ENCODE measurements at regions of chr1 and their contacts with region 1.

Region 1: DNA sequence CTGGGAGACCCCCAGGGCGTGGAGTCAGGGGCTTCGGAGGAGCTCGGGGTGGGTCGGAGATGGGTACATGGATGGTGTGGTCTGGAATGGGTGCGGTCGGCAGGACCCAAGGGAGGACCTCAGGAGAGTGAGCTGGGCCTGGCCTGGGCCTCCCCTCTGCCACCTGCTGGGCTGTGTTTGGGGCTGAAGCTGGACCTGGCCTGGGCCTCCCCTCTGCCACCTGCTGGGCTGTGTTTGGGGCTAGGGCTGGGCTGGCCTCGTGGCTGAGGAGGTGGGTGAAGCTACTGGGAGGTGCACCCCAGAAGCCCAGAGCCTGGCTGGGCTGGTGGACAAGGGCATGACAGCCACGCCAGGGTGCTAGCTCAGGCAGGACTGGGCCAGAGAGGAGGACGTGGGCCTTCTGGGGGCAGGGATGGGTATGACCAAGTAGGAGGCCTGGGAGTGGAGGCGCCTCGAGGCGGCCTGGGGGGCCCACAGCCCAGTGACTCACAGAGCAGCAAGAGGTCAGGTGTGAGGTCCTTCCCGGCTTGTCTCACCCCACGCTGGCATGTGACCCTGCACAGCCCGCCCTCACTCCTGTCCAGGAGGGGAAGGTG is 14.5 kb downstream of the SAMD11 start:
- DNase-seq: peak; percentile 65
- ATAC-seq: peak; percentile 75
- H3K4me3 ChIP-seq: no peak overlapping the region
- H3K27ac ChIP-seq: no peak overlapping the region
- H3K4me1 ChIP-seq: peaks cover 27% of the 10 kb centered on the region
- H3K27me3 ChIP-seq: peaks cover 40% of the 10 kb centered on the region
- CTCF ChIP-seq: peak; percentile 81

Region 2: GRCh38 chr1:904310-904950 is 33.8 kb before region 1 on chr1:
- CTCF ChIA-PET with region 1: interaction called, 5 read pairs
- POLR2A ChIA-PET with region 1: interaction called, 3 read pairs
- intact Hi-C with region 1: loop called (anchors 1 kb)
- DNase-seq: peak; percentile 79
- ATAC-seq: peak; percentile 75
- H3K4me3 ChIP-seq: peak overlapping the region; percentile 65
- H3K27ac ChIP-seq: no peak overlapping the region
- H3K4me1 ChIP-seq: peaks cover 22% of the 10 kb centered on the region
- H3K27me3 ChIP-seq: no peaks in the 10 kb centered on the region
- CTCF ChIP-seq: peak; percentile 68

Region 3: GRCh38 chr1:921011-921837 is 17.0 kb before region 1 on chr1:
- CTCF ChIA-PET with region 1: interaction called, 3 read pairs
- POLR2A ChIA-PET with region 1: no interaction called
- intact Hi-C with region 1: loop called (anchors 2 kb)
- DNase-seq: peak; percentile 68
- ATAC-seq: peak; percentile 44
- H3K4me3 ChIP-seq: no peak overlapping the region
- H3K27ac ChIP-seq: no peak overlapping the region
- H3K4me1 ChIP-seq: peaks cover 10% of the 10 kb centered on the region
- H3K27me3 ChIP-seq: peaks cover 85% of the 10 kb centered on the region
- CTCF ChIP-seq: peak; percentile 34; the same call in 1 of the 2 replicates

Region 4: DNA sequence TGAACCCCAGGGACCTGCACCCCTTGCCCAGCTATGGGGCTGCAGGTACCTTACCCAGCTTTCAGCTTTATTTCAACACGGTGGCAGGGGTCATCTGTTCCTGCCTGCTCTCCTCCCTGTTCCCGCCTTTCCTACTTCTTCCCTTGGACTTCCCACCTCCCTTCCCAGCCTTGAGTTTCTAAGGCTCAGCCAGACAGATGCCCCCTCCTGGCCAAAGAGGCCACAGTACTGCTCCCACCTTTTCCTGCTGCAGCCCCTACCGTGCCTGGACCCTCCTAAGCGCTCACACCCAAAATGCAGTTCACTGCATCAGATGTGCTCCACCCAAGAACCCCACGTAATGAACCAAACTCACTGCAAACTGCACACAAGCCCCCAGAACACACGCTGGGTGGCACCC is 13.2 kb after region 1 on chr1:
- CTCF ChIA-PET with region 1: no interaction called
- POLR2A ChIA-PET with region 1: no interaction called
- intact Hi-C with region 1: no loop called
- DNase-seq: no peak
- ATAC-seq: no peak
- H3K4me3 ChIP-seq: no peak overlapping the region
- H3K27ac ChIP-seq: no peak overlapping the region
- H3K4me1 ChIP-seq: no peaks in the 10 kb centered on the region
- H3K27me3 ChIP-seq: no peaks in the 10 kb centered on the region
- CTCF ChIP-seq: peak; percentile 59

Measured in PC-3 (cell line).